Cardiac septum (tissue), 1 donor: ENCODE measurements at regions of chr12 and their contacts with region 1.

Region 1: GRCh38 chr12:75722714-75723200 is 211.3 kb upstream of the KRR1 start:
- DNase-seq: no peak

Region 2: GRCh38 chr12:75658901-75659383 is 63.8 kb before region 1 on chr12:
- intact Hi-C with region 1: loop called (anchors 5 kb)
- DNase-seq: no peak

Region 3: DNA sequence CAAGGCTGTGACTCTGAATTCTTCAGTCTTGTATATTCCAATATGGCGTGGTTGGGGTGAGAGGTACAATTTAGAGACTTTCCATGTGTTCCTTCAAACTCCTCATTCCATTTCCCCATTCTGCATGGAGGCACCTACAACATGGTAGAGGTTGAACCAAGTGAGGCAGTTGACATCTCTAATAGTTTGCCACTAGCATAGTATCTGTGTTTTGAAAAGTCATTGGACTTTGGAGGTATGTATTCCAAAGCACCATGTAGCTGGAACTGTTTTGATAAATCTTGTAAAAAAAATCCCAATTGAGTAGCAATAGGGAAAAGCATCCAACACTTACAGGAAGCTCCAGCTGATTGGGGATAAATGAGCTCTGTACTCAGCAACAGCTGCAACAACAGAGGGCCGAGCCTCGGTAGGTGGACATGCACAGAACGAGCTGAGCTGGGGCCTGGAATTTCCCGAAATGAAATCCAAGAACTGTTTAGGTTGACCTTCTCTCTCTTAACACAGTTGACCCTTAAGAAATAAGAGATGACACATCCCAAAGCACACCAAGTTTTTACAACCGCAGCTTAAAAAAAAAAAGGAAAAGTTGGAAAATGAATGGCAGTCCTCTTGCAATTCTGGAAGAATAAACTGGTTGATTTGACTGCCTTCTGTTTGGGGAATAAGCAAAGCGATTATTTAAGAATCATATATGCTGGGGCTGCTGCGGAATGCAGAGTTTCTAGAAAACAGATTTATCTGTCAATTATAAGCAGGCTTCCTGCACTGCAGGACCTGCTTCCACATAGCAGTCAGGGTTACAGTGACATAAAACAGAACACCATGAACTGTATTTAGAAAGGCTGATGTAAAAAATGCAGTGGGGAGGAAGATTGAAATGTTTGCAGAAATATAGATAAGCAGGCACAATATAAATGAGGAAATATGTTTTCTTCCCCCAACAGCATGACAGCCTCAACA is 16.7 kb before region 1 on chr12:
- intact Hi-C with region 1: loop called (anchors 2 kb)
- DNase-seq: peak; percentile 80

Region 4: GRCh38 chr12:75820848-75821578 is 98.3 kb after region 1 on chr12:
- intact Hi-C with region 1: loop called (anchors 10 kb)
- DNase-seq: no peak

Region 5: GRCh38 chr12:75868501-75868900 is 145.7 kb after region 1 on chr12:
- intact Hi-C with region 1: no loop called
- DNase-seq: peak; percentile 78